Naive thymus-derived CD4-positive, alpha-beta T cell (primary cell): ENCODE measurements at regions of chr19 and their contacts with region 1.

Region 1: GRCh38 chr19:58408152-58409009 is at the start of gene ZNF584:
- DNase-seq: peak; percentile 86 to 94 (median 92)
- ATAC-seq: peak; percentile 98
- H3K4me3 ChIP-seq: peak within 1 kb of the TSS; percentile 96
- H3K4me3 Mint-ChIP-seq: peak within 1 kb of the TSS; percentile 82 to 98 (median 95)
- H3K27ac ChIP-seq: peak within 1 kb of the TSS; percentile 87
- H3K27ac Mint-ChIP-seq: peak within 1 kb of the TSS; percentile 83 to 95 (median 93)
- H3K4me1 ChIP-seq: peaks cover 12 to 15% of the 10 kb centered on the region in 2 donors
- H3K4me1 Mint-ChIP-seq: peaks cover 5 to 45% (median 34%) of the 10 kb centered on the region in 7 donors
- H3K27me3 ChIP-seq: no peaks in the 10 kb centered on the region
- H3K27me3 Mint-ChIP-seq: no peaks in the 10 kb centered on the region
- total RNA-seq, gene ZNF584: 4.2 to 12.1 (median 8.8) TPM

Region 2: DNA sequence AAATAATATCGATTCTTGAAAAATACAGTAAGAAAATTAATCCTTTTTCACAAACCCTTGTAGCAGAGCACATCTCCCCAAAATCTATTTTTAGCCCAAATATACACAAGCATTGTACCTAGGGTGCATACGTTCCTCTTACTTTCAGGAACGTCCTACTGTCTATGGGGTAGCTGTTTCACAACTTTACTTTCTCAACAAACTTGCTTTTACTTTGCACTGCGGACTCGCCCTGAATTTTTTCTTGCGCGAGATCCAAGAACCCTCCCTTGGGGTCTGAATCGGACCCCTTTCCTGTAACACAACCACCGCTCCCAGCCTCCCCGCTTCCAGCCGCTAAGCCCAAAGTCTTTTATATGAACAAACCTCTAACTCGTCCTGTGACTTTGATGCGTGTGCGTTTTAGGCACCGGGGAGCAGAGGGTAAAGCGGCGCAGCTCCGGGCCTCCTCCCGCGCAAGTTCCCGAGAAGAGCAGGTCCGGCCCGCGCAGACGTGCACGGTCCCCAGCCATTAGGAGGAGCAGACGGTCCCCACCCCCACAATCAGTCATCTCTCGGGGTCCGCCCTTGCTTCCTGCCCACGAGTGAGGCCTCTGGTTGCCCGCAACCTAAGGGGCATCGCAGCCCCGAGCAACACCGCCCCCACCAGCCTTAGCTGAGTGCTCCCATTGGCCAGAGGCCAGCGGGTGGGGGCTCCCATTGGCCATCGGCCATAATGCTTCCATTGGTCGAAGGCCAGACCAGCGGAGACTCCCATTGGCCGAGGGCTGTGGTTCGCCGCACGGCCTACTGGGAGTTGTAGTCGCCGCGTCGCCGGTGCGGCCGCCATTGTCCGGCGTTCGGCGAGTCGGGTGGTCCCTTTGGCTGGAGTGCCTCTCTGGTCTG is 130.0 kb before region 1 on chr19 and contains the start of gene ZNF8:
- CTCF ChIA-PET with region 1: no interaction called
- POLR2A ChIA-PET with region 1: interaction called, 7 read pairs
- intact Hi-C with region 1: loop called (anchors 1 to 2 kb)
- DNase-seq: peak; percentile 84 to 96 (median 93)
- ATAC-seq: peak; percentile 99
- H3K4me3 ChIP-seq: peak within 1 kb of the TSS; percentile 93
- H3K4me3 Mint-ChIP-seq: peak within 1 kb of the TSS; percentile 89 to 99 (median 95)
- H3K27ac ChIP-seq: peak within 1 kb of the TSS; percentile 80
- H3K27ac Mint-ChIP-seq: peak within 1 kb of the TSS; percentile 88 to 97 (median 96)
- H3K4me1 ChIP-seq: peaks cover 12 to 15% of the 10 kb centered on the region in 2 donors
- H3K4me1 Mint-ChIP-seq: peaks cover 28 to 63% (median 43%) of the 10 kb centered on the region in 7 donors
- H3K27me3 ChIP-seq: no peaks in the 10 kb centered on the region
- H3K27me3 Mint-ChIP-seq: no peaks in the 10 kb centered on the region
- total RNA-seq, gene ZNF8: 5.2 to 10.5 (median 10.0) TPM

Region 3: DNA sequence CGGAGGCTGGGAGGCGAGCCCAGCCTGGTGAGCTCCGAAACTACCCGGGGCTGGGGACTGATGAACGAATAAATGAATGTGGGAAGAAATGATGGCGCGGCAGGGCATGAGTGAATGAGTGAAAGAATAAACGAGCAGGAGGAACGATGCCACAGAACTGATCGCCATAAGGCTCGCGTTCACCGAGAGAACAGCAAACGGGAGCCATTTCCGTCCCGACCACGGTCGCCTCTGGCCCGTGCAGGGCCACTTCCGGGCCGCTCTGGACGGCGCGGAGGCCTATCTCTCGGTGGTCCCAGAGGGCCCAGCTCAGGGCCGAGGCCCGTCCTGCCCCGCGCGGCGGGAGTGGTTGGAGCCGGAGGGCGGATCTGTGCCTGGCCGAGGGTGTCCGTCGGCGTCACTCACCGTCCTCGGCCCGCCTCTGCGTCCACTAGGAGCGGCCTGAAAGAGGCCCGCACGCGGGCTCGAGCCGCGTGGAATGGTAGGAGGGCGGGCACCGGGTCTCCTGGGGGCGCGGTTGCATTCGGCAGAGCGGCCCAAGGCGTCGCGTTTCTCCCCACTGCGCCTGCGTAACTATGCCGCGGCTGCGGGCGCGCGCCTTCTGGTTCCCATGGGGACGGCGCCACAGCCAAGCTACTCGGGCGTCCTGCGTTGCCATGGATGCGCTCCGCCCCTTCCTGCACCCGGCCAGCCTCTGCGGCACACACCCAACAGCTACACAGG is 45.9 kb before region 1 on chr19 and contains the start of gene ZNF497:
- CTCF ChIA-PET with region 1: no interaction called
- POLR2A ChIA-PET with region 1: interaction called, 5 read pairs
- intact Hi-C with region 1: loop called (anchors 1 kb)
- DNase-seq: peak; percentile 91 to 96 (median 95)
- ATAC-seq: peak; percentile 92
- H3K4me3 ChIP-seq: peak within 1 kb of the TSS; percentile 99
- H3K4me3 Mint-ChIP-seq: peak within 1 kb of the TSS; percentile 89 to 99 (median 95)
- H3K27ac ChIP-seq: peak within 1 kb of the TSS; percentile 78
- H3K27ac Mint-ChIP-seq: peak within 1 kb of the TSS; percentile 71 to 96 (median 90)
- H3K4me1 ChIP-seq: peaks cover 5 to 7% of the 10 kb centered on the region in 2 donors
- H3K4me1 Mint-ChIP-seq: peaks cover 7 to 21% (median 11%) of the 10 kb centered on the region in 7 donors
- H3K27me3 ChIP-seq: no peaks in the 10 kb centered on the region
- H3K27me3 Mint-ChIP-seq: peaks cover 0 to 5% (median 0%) of the 10 kb centered on the region in 5 donors
- total RNA-seq, gene ZNF497: 1.0 to 2.7 (median 1.8) TPM

Region 4: DNA sequence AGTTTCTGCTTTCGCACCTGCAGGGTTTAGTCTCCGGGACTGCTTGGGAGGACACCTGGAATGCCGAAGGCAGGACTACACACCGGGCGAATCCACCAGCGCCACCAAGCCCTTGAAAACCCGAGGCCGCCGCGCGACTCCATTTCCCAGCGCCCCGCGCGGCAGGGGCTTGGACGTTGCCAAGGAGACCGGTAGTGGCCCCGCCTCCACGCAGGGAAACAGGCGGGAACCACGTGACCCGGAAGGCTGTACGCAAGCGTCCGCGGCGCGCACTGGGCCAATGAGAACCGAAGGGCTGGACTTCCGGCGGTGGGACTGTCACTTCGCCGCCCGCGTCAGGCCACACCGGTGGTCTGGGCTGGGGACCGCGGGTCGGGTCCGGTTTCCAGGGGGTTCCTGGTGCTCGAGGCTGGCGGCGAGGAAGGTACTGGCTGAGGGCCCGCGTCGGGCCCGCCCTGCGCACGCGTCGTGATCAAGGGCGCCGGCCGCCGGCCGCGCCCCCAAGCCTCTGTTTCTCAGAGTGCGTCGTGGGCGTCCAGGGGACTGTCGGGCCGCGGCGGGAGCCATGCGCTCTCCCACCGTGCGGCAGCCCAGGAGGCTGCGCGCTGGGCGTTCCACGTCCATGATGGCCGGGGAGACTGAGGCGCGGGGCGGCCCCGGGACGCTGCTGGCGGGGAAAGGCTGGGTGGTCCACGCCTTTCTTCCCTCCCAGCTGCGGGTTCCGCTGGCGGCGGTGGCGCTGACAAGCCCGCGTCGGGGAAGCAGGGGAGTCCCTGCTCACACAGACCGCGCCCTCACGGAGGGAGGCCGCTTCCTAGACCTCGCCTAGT is 58.6 kb after region 1 on chr19 and contains the start of gene ZNF324:
- CTCF ChIA-PET with region 1: no interaction called
- POLR2A ChIA-PET with region 1: no interaction called
- intact Hi-C with region 1: loop called (anchors 1 kb)
- DNase-seq: peak; percentile 92 to 97 (median 95)
- ATAC-seq: peak; percentile 98
- H3K4me3 ChIP-seq: peak within 1 kb of the TSS; percentile 92
- H3K4me3 Mint-ChIP-seq: peak within 1 kb of the TSS; percentile 80 to 89 (median 86)
- H3K27ac ChIP-seq: peak within 1 kb of the TSS; percentile 99
- H3K27ac Mint-ChIP-seq: peak within 1 kb of the TSS in 8 of 9 donors; percentile 67 to 91 (median 85)
- H3K4me1 ChIP-seq: peaks cover 7 to 11% of the 10 kb centered on the region in 2 donors
- H3K4me1 Mint-ChIP-seq: peaks cover 14 to 27% (median 22%) of the 10 kb centered on the region in 7 donors
- H3K27me3 ChIP-seq: no peaks in the 10 kb centered on the region
- H3K27me3 Mint-ChIP-seq: peaks cover 0 to 3% (median 0%) of the 10 kb centered on the region in 5 donors
- total RNA-seq, gene ZNF324: 14.2 to 28.0 (median 23.4) TPM

Region 5: DNA sequence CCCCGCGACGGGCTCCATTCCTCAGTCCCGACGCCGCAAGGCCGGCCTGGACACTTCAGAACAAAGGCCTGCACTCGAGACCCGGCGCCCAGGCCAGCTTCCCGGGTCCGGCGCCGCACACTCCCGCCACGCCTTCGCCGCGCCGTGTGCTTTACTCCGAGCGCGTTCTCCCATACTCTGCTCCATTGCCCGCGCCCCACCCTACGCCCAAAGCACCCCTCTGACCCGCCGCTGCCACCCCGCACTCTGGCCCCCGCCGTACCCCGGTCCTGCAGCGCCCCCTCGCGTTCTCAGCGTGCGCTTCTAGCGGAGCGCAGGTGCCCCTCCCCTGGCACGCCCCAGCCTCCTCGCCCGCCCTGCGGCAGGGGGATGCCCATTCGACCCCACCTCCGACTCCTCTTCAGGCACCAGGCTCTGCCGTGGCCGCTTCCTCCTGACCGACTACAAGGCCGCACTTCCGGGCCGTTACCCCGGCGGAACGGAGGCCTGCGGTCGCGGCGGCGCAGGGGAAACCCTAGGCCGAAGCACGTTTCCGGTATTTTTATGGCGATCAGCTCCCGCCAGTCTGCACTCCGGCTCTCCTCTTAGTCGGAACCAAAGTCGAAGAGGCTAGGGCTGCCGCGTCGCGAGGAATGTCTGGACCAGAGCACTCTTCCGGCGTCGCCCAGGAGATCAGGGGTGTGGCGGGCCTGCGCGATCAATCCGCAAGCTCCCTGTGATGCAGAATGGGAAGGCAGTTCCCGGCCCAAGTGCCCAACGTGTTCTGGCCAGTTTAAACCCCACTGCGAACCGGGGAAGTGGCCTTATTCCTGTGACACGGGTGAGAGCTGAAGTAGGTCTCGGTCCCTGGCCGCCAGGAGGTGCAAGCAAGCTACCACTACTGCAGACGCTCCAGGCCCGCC is 111.2 kb after region 1 on chr19 and contains the start of gene ZBTB45:
- CTCF ChIA-PET with region 1: no interaction called
- POLR2A ChIA-PET with region 1: interaction called, 4 read pairs
- intact Hi-C with region 1: loop called in 1 of 2 experiments (anchors 1 kb)
- DNase-seq: peak; percentile 81 to 97 (median 88)
- ATAC-seq: peak; percentile 89
- H3K4me3 ChIP-seq: peak within 1 kb of the TSS; percentile 76
- H3K4me3 Mint-ChIP-seq: peak within 1 kb of the TSS; percentile 90 to 97 (median 95)
- H3K27ac ChIP-seq: peak within 1 kb of the TSS; percentile 86
- H3K27ac Mint-ChIP-seq: peak within 1 kb of the TSS; percentile 92 to 99 (median 97)
- H3K4me1 ChIP-seq: peaks cover 10 to 14% of the 10 kb centered on the region in 2 donors
- H3K4me1 Mint-ChIP-seq: peaks cover 29 to 43% (median 37%) of the 10 kb centered on the region in 7 donors
- H3K27me3 ChIP-seq: no peaks in the 10 kb centered on the region
- H3K27me3 Mint-ChIP-seq: peaks cover 0 to 3% (median 0%) of the 10 kb centered on the region in 5 donors
- total RNA-seq, gene ZBTB45: 9.8 to 19.2 (median 17.0) TPM